ENCODE measurements at regions of chr1 and their contacts with region 1.

Region 1: GRCh38 chr1:243842978-243843511 is 7.0 kb downstream of the AKT3 start:
- DNase-seq: peak in 4 of 14 experiments; percentile 28 to 45 (median 39)
- ATAC-seq: peak; percentile 33
- H3K4me3 ChIP-seq: no peak overlapping the region
- H3K4me3 Mint-ChIP-seq: peak overlapping the region; percentile 76
- H3K27ac ChIP-seq: peak overlapping the region; percentile 2 to 45
- H3K27ac Mint-ChIP-seq: peak overlapping the region; percentile 89
- H3K4me1 ChIP-seq: peaks cover 6% of the 10 kb centered on the region
- H3K4me1 Mint-ChIP-seq: peaks cover 78% of the 10 kb centered on the region
- H3K27me3 ChIP-seq: no peaks in the 10 kb centered on the region
- H3K27me3 Mint-ChIP-seq: no peaks in the 10 kb centered on the region
- CTCF ChIP-seq: no peak

Region 2: DNA sequence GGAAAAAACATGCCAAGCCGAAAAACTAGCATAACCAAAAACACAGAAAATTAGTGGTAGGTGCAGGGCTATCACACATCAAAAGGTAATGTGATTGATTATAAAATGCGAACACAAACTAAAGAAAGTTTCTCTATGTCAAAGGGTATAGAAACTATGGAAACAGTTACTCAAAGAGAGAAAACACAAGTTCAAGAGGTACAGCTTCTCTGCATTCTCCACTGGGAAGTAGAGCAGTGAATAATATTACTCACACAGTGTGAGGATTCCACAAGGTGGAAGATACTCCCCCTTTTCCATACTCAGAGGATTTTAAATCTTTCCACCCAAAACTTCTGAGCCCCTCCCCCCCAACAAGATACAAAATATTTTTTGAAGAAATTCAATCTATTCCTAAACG is 11.6 kb before region 1 on chr1:
- CTCF ChIA-PET with region 1: no interaction called
- POLR2A ChIA-PET with region 1: no interaction called
- intact Hi-C with region 1: loop called in 1 of 2 experiments (anchors 1 kb)
- DNase-seq: no peak
- ATAC-seq: no peak
- H3K4me3 ChIP-seq: no peak overlapping the region
- H3K4me3 Mint-ChIP-seq: no peak overlapping the region
- H3K27ac ChIP-seq: no peak overlapping the region
- H3K27ac Mint-ChIP-seq: no peak overlapping the region
- H3K4me1 ChIP-seq: no peaks in the 10 kb centered on the region
- H3K4me1 Mint-ChIP-seq: peaks cover 75% of the 10 kb centered on the region
- H3K27me3 ChIP-seq: no peaks in the 10 kb centered on the region
- H3K27me3 Mint-ChIP-seq: no peaks in the 10 kb centered on the region
- CTCF ChIP-seq: no peak

Region 3: DNA sequence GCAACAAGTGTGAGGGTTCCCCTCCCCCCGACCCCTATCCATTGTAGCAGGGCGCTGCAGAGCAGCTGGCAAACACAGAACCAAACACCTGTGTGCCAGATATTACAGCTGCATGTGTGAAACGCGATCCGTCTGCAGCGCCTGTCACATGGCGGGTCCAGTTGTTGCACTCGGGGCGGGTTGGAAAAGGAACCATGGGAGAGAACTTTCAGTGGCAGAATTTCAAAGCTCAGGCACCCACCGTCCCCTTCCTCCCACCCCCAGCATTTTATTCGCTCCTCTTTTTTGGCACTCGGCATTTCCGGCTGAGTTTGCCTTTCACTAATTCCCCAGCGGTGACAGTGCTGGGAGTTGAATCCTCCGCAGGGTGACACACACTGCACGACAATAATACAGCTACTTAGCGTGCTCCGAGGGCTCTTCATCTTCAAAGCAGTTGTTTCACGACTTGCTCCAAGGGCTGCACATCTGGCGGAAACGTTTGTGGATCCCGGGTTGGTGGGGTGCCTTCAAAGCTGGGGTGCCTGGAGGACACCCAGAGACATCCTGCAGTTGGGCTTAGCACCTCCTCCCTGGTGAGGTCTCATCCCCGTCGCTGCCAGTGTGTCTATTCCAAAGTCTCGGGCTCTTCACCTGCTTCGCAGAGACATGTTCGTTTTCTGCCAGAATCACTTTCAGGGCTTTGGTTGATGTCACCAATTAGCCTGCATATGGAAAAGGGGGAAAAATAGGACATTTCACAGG is 388.7 kb after region 1 on chr1:
- CTCF ChIA-PET with region 1: no interaction called
- POLR2A ChIA-PET with region 1: no interaction called
- intact Hi-C with region 1: no loop called
- DNase-seq: no peak
- ATAC-seq: no peak
- H3K4me3 ChIP-seq: no peak overlapping the region
- H3K4me3 Mint-ChIP-seq: no peak overlapping the region
- H3K27ac ChIP-seq: no peak overlapping the region
- H3K27ac Mint-ChIP-seq: no peak overlapping the region
- H3K4me1 ChIP-seq: no peaks in the 10 kb centered on the region
- H3K4me1 Mint-ChIP-seq: no peaks in the 10 kb centered on the region
- H3K27me3 ChIP-seq: no peaks in the 10 kb centered on the region
- H3K27me3 Mint-ChIP-seq: peaks cover 7% of the 10 kb centered on the region
- CTCF ChIP-seq: no peak

Measured in CD4-positive, alpha-beta T cell (primary cell).